ENCODE measurements at regions of chr7 and their contacts with region 1.

Region 1: GRCh38 chr7:129169686-129170440 is 18.6 kb upstream of the SMO start:
- DNase-seq: peak in 1 of 10 donors; percentile 46

Region 2: GRCh38 chr7:129205987-129206785 is 36.3 kb after region 1 on chr7:
- intact Hi-C with region 1: loop called (anchors 5 kb)
- DNase-seq: peak in 1 of 10 donors; percentile 67

Measured in posterior cingulate gyrus (tissue), 11 donors.